GM12878 (cell line): ENCODE measurements at regions of chr6 and their contacts with region 1.

Region 1: DNA sequence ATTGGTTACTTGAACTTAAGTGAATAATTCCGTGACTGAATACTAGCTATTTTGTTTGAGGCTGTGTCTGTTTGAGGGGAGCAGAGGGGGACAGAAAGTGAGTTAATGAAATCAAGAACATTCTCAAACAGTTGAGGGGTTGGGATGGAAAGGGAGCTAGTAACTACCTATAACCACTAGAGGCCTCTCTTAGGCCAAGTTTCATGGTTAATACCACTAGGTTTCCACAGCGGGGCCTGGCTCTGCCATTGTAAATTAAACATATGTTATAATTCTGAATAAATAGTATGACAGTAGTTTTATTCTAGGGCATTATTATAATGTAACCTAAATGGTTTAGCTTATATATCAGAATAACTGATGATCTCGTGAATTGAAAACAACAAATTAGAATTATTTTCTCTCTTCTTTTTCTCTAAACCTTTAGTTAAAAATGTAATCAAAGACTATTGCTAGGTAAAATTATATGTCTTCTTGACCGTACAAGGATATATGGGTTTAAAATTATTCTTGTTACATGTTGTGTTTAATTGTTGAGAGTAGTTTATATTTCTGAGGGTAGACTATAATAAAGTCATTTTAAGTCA is 108.1 kb downstream of the BCKDHB start:
- DNase-seq: no peak
- ATAC-seq: peak; percentile 94
- H3K4me3 ChIP-seq: no peak overlapping the region
- H3K27ac ChIP-seq: no peak overlapping the region
- H3K4me1 ChIP-seq: peaks cover 3% of the 10 kb centered on the region
- H3K27me3 ChIP-seq: no peaks in the 10 kb centered on the region
- CTCF ChIP-seq: peak; percentile 70 to 74 (median 72)
- EP300 ChIP-seq: no peak
- POLR2A ChIP-seq: no peak
- RAD21 ChIP-seq: peak; percentile 82

Region 2: GRCh38 chr6:79941489-79942151 is 272.9 kb before region 1 on chr6:
- CTCF ChIA-PET with region 1: no interaction called
- POLR2A ChIA-PET with region 1: no interaction called
- RAD21 ChIA-PET with region 1: no interaction called
- SMC1A ChIA-PET with region 1: no interaction called
- in situ Hi-C with region 1: no loop called
- intact Hi-C with region 1: no loop called
- DNase-seq: no peak
- ATAC-seq: no peak
- H3K4me3 ChIP-seq: no peak overlapping the region
- H3K27ac ChIP-seq: no peak overlapping the region
- H3K4me1 ChIP-seq: no peaks in the 10 kb centered on the region
- H3K27me3 ChIP-seq: peaks cover 1 to 5% of the 10 kb centered on the region in 2 experiments
- CTCF ChIP-seq: no peak
- EP300 ChIP-seq: no peak
- POLR2A ChIP-seq: no peak
- RAD21 ChIP-seq: no peak

Region 3: GRCh38 chr6:80331974-80332373 is 117.4 kb after region 1 on chr6:
- CTCF ChIA-PET with region 1: interaction called, 19 read pairs
- POLR2A ChIA-PET with region 1: no interaction called
- RAD21 ChIA-PET with region 1: interaction called, 4 read pairs
- SMC1A ChIA-PET with region 1: interaction called, 3 read pairs
- in situ Hi-C with region 1: no loop called
- intact Hi-C with region 1: loop called (anchors 5 kb)
- DNase-seq: no peak
- ATAC-seq: no peak
- H3K4me3 ChIP-seq: no peak overlapping the region
- H3K27ac ChIP-seq: no peak overlapping the region
- H3K4me1 ChIP-seq: no peaks in the 10 kb centered on the region
- H3K27me3 ChIP-seq: no peaks in the 10 kb centered on the region
- CTCF ChIP-seq: no peak
- EP300 ChIP-seq: no peak
- POLR2A ChIP-seq: no peak
- RAD21 ChIP-seq: no peak

Region 4: DNA sequence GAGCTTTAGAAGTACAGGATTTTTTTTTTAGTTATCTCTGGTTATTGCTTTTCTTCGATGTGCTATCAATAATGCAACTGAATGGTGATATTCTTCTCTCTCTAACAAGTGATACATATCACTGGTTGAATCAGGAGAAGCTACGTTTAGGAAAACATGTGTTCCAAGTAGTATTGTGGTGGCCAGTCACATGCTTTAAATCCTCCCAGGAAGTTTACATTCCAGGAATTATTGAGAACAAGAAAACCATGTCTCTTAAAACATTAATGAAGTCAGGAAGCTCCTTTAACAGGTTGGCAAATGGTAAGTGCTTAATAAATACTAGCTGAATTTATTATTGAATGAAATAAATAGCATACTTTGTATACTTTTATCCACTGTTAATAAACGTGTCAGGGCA is 263.1 kb after region 1 on chr6:
- CTCF ChIA-PET with region 1: interaction called, 4 read pairs
- POLR2A ChIA-PET with region 1: no interaction called
- RAD21 ChIA-PET with region 1: no interaction called
- SMC1A ChIA-PET with region 1: no interaction called
- in situ Hi-C with region 1: no loop called
- intact Hi-C with region 1: loop called (anchors 10 kb)
- DNase-seq: no peak
- ATAC-seq: no peak
- H3K4me3 ChIP-seq: no peak overlapping the region
- H3K27ac ChIP-seq: no peak overlapping the region
- H3K4me1 ChIP-seq: no peaks in the 10 kb centered on the region
- H3K27me3 ChIP-seq: no peaks in the 10 kb centered on the region
- CTCF ChIP-seq: no peak
- EP300 ChIP-seq: no peak
- POLR2A ChIP-seq: no peak
- RAD21 ChIP-seq: no peak

Region 5: DNA sequence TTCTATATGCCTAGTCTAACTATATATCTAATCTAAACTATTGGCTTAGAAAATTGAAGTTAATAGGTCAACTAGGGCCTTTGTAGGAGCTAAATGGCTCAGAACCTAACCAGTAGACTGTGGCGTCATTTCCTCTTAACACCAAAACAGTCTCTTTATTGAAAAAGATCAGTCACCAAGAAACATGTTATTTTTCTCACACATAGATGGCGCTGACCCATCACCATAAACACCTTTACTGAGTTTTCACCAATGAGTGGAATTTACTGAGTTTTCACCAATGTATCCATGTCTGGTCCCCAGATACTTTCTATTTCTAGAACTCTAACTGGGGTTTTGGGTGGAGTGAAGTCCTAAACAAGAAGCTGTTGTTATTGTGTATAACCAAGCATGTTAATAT is 528.0 kb after region 1 on chr6:
- CTCF ChIA-PET with region 1: no interaction called
- POLR2A ChIA-PET with region 1: no interaction called
- RAD21 ChIA-PET with region 1: interaction called, 5 read pairs
- SMC1A ChIA-PET with region 1: no interaction called
- in situ Hi-C with region 1: no loop called
- intact Hi-C with region 1: loop called (anchors 10 kb)
- DNase-seq: no peak
- ATAC-seq: peak; percentile 52
- H3K4me3 ChIP-seq: no peak overlapping the region
- H3K27ac ChIP-seq: no peak overlapping the region
- H3K4me1 ChIP-seq: no peaks in the 10 kb centered on the region
- H3K27me3 ChIP-seq: no peaks in the 10 kb centered on the region
- CTCF ChIP-seq: peak in 1 of 3 experiments; percentile 32; a peak in 2 of 6 replicates
- EP300 ChIP-seq: no peak
- POLR2A ChIP-seq: no peak
- RAD21 ChIP-seq: peak; percentile 43; the same call in 1 of the 2 replicates